Endothelial cell of umbilical vein (primary cell): ENCODE measurements at regions of chr1 and their contacts with region 1.

Region 1: GRCh38 chr1:205812878-205813754 is at the start of gene SLC41A1:
- DNase-seq: peak; percentile 96
- H3K4me3 ChIP-seq: peak within 1 kb of the TSS; percentile 49 to 78 (median 76)
- H3K27ac ChIP-seq: peak within 1 kb of the TSS; percentile 45
- H3K4me1 ChIP-seq: peaks cover 10% of the 10 kb centered on the region
- H3K27me3 ChIP-seq: no peaks in the 10 kb centered on the region
- CTCF ChIP-seq: no peak
- POLR2A ChIP-seq: peak; percentile 41
- total RNA-seq, gene SLC41A1: 21.7 and 23.6 TPM in 2 replicates

Region 2: DNA sequence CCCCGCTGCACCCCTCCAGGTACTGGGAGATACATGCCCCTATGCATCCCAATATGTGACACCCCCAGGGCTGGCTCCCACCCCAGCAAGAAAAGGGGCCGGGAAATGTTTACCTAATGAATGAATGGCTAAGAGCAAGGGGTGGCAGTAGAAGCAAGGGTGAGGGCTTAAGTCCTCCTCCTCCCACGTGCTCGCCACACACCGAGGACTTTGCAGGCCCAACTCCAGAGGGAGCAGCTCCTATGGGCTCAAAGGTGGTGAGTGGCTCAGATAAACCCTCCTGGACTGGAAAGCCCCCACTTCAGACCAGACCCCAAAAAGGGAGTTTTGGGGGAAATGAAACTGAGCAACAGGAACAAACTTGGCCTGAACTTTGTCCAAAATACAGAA is 144.2 kb before region 1 on chr1:
- CTCF ChIA-PET with region 1: no interaction called
- POLR2A ChIA-PET with region 1: no interaction called
- dilution Hi-C with region 1: no loop called
- intact Hi-C with region 1: no loop called
- DNase-seq: no peak
- H3K4me3 ChIP-seq: no peak overlapping the region
- H3K27ac ChIP-seq: no peak overlapping the region
- H3K4me1 ChIP-seq: peaks cover 35% of the 10 kb centered on the region
- H3K27me3 ChIP-seq: no peaks in the 10 kb centered on the region
- CTCF ChIP-seq: no peak
- POLR2A ChIP-seq: no peak

Region 3: GRCh38 chr1:205750138-205751035 is 62.7 kb before region 1 on chr1 and contains the start of gene NUCKS1:
- CTCF ChIA-PET with region 1: no interaction called
- POLR2A ChIA-PET with region 1: no interaction called
- dilution Hi-C with region 1: no loop called
- intact Hi-C with region 1: loop called (anchors 1 kb)
- DNase-seq: peak; percentile 98
- H3K4me3 ChIP-seq: peak within 1 kb of the TSS; percentile 64 to 86 (median 77)
- H3K27ac ChIP-seq: peak within 1 kb of the TSS; percentile 97
- H3K4me1 ChIP-seq: peaks cover 28% of the 10 kb centered on the region
- H3K27me3 ChIP-seq: peaks cover 8 to 14% of the 10 kb centered on the region in 2 experiments
- CTCF ChIP-seq: no peak
- POLR2A ChIP-seq: no peak
- total RNA-seq, gene NUCKS1: 282 and 288 TPM in 2 replicates

Region 4: DNA sequence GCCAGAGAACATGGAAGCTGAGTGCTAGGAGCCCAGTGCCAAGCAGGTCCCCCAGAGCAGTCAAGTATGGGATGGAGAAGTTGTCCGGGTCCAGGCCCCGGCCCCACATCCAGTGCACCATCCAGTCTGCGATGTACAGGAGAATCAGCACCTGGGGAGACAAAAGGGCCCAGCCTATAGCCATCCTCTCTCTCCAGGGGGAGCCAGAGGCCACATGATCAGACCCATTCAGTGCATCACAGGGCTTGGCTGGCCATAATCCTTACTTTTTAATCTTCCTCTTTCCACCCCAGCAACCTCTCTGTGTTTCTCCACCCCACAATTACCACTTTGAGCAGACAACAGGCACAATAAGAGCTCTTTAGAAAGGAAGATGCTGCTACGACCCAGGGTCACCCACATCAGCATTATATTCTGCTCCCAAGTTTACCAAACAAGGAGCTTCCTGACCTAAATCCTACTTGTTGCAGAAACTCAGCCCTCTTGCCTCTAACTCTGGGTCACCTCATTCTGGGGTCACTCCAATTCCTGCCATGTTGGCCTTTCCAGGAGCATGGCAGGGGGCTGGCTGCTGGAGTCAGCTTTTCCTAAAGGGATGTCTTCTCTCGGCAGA is 21.4 kb before region 1 on chr1:
- CTCF ChIA-PET with region 1: interaction called, 40 read pairs
- POLR2A ChIA-PET with region 1: no interaction called
- dilution Hi-C with region 1: no loop called
- intact Hi-C with region 1: no loop called
- DNase-seq: peak; percentile 53
- H3K4me3 ChIP-seq: no peak overlapping the region
- H3K27ac ChIP-seq: no peak overlapping the region
- H3K4me1 ChIP-seq: no peaks in the 10 kb centered on the region
- H3K27me3 ChIP-seq: no peaks in the 10 kb centered on the region
- CTCF ChIP-seq: peak; percentile 71 to 86
- POLR2A ChIP-seq: no peak

Region 5: GRCh38 chr1:205827623-205828022 is 14.5 kb after region 1 on chr1:
- CTCF ChIA-PET with region 1: interaction called, 9 read pairs
- POLR2A ChIA-PET with region 1: no interaction called
- dilution Hi-C with region 1: no loop called
- intact Hi-C with region 1: loop called (anchors 2 kb)
- DNase-seq: no peak
- H3K4me3 ChIP-seq: no peak overlapping the region
- H3K27ac ChIP-seq: no peak overlapping the region
- H3K4me1 ChIP-seq: no peaks in the 10 kb centered on the region
- H3K27me3 ChIP-seq: peaks cover 5 to 14% of the 10 kb centered on the region in 2 experiments
- CTCF ChIP-seq: no peak
- POLR2A ChIP-seq: no peak

Region 6: DNA sequence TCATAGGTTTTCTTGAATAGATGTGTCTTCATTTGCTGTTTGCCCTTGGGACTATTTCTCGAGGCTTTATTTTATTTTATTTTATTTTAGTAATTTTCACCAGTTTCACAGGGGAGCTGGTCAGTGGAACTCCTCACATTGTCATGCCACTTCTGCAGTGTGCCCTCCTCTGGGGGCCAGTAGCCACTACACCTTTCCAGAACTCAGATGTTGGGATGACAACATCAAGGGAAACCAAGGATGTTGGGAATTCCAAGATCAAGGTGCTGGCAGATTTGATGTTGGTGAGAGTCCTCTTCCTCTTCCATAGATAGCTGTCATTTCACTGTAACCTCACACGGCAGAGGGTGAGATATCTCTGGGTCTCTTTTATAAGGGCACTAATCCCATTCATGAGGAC is 94.7 kb after region 1 on chr1:
- CTCF ChIA-PET with region 1: interaction called, 13 read pairs
- POLR2A ChIA-PET with region 1: no interaction called
- dilution Hi-C with region 1: no loop called
- intact Hi-C with region 1: loop called (anchors 5 kb)
- DNase-seq: peak; percentile 46
- H3K4me3 ChIP-seq: no peak overlapping the region
- H3K27ac ChIP-seq: no peak overlapping the region
- H3K4me1 ChIP-seq: no peaks in the 10 kb centered on the region
- H3K27me3 ChIP-seq: peaks cover 5 to 9% of the 10 kb centered on the region in 2 experiments
- CTCF ChIP-seq: peak; percentile 65 to 75
- POLR2A ChIP-seq: no peak

Region 7: GRCh38 chr1:205933671-205934618 is 120.8 kb after region 1 on chr1:
- CTCF ChIA-PET with region 1: no interaction called
- POLR2A ChIA-PET with region 1: no interaction called
- dilution Hi-C with region 1: no loop called
- intact Hi-C with region 1: loop called (anchors 1 kb)
- DNase-seq: peak; percentile 84
- H3K4me3 ChIP-seq: no peak overlapping the region
- H3K27ac ChIP-seq: peak overlapping the region; percentile 76
- H3K4me1 ChIP-seq: peaks cover 35% of the 10 kb centered on the region
- H3K27me3 ChIP-seq: no peaks in the 10 kb centered on the region
- CTCF ChIP-seq: no peak
- POLR2A ChIP-seq: no peak